ENCODE measurements at regions of chr1 and their contacts with region 1.

Region 1: DNA sequence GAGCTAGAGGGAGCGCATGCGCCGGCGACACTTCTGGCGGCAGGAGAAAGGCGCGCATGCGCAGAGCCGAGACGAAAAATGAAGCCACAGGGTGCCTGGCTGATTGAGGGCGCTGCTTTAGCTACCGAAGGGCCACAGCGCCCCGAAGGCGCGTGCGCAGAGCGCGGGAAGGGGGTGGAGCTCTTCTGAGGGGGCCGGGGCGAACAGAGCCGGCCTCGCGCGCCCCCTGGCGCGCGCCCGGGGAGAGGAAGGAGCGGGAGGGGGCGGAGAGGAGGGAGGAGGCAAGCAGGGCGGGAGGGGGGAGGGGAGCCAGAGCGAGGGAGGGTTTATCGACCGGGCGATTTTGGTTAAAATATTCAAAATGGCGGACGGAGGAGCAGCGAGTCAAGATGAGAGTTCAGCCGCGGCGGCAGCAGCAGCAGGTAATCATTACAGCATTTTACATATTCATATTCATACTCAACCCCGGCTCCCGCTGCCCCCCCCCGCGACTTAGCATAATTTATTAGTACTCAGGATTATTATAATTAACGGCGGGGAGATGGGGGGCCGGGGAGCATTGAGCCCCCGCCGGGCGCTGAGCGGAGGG is at the start of gene POU2F1:
- DNase-seq: peak; percentile 94
- ATAC-seq: peak; percentile 81
- H3K4me3 ChIP-seq: peak within 1 kb of the TSS; percentile 92
- H3K27ac ChIP-seq: peak within 1 kb of the TSS; percentile 98
- H3K4me1 ChIP-seq: peaks cover 10% of the 10 kb centered on the region; the same call in 1 of the 2 replicates
- H3K27me3 ChIP-seq: no peaks in the 10 kb centered on the region
- CTCF ChIP-seq: peak; percentile 64 to 81 (median 78)
- EP300 ChIP-seq: no peak
- POLR2A ChIP-seq: no peak; the same call in 1 of the 2 replicates
- RAD21 ChIP-seq: peak; percentile 63
- polyA plus RNA-seq, gene POU2F1: 2.5 to 4.6 TPM

Region 2: GRCh38 chr1:166910396-166910994 is 310.1 kb before region 1 on chr1:
- CTCF ChIA-PET with region 1: interaction called, 17 read pairs
- POLR2A ChIA-PET with region 1: no interaction called
- RAD21 ChIA-PET with region 1: interaction called, 9 read pairs
- SMC1A ChIA-PET with region 1: interaction called, 4 read pairs
- in situ Hi-C with region 1: no loop called
- intact Hi-C with region 1: no loop called
- DNase-seq: peak; percentile 70
- ATAC-seq: peak; percentile 99
- H3K4me3 ChIP-seq: no peak overlapping the region
- H3K27ac ChIP-seq: no peak overlapping the region
- H3K4me1 ChIP-seq: peaks cover 5% of the 10 kb centered on the region; the same call in 1 of the 2 replicates
- H3K27me3 ChIP-seq: no peaks in the 10 kb centered on the region
- CTCF ChIP-seq: peak; percentile 81 to 92 (median 85)
- EP300 ChIP-seq: no peak
- POLR2A ChIP-seq: no peak
- RAD21 ChIP-seq: peak; percentile 94

Region 3: DNA sequence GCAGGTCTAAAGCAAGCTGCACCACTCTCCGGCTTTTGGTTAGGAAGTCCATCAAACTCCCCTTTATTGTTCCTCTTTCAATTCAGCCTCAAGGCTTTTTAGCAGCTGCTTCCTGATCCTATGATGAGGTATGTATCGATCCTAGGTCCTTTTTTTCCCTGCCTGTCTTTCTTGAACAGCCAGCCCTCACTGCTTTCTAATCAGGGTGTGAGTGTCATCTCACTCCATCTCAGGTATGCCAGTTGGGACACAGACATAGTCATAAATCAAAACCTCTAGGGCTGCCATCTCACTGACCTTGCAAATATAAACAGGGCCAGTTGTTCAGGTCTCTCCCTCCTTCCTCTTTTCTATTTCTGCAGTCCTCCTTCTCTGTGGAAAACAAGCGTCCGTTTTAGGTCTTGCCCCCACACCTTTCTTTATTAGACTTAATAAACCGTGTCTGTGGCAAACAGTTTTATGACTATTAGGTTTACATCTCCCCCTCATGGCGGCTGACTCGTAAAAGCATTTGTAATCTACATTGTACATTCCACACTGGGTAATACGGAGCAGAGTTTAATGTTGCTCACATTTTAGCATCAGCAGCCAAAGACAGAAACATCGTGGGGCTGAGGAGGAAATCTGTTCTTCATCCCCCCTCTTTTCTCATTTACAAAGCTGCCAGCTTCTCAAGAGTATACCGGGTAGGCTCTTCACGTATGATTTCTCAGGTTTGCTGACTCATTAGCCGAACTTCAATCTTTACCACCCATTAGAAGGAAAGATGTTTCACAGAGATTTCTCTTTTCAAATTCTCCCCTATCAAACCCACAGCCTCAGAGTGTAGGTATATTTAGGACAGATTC is 115.1 kb before region 1 on chr1:
- CTCF ChIA-PET with region 1: interaction called, 6 read pairs
- POLR2A ChIA-PET with region 1: no interaction called
- RAD21 ChIA-PET with region 1: interaction called, 4 read pairs
- SMC1A ChIA-PET with region 1: interaction called, 4 read pairs
- in situ Hi-C with region 1: no loop called
- intact Hi-C with region 1: loop called (anchors 5 kb)
- DNase-seq: no peak
- ATAC-seq: peak; percentile 65
- H3K4me3 ChIP-seq: no peak overlapping the region
- H3K27ac ChIP-seq: no peak overlapping the region
- H3K4me1 ChIP-seq: peaks cover 28% of the 10 kb centered on the region
- H3K27me3 ChIP-seq: no peaks in the 10 kb centered on the region
- CTCF ChIP-seq: peak in 1 of 3 experiments; percentile 21; a peak in 1 of 6 replicates
- EP300 ChIP-seq: no peak
- POLR2A ChIP-seq: no peak
- RAD21 ChIP-seq: no peak

Region 4: DNA sequence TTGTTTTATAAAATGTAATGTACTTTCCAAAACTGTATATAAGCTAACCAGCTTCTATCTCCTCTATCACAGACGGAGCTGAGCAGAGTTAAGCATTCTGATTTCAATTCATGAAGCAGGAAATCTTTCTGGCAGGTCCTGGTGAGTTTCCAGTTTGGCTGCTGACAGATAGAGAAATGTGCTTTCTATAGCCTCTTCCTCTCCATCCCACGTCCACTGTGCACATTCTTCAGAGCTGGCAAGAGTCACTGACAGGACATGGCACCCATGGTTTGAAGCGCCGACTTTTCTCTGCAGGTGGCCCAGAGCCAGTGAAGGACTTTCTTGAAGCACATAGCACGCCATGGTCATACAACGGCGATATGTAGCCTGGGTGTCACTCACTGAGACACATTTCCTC is 52.2 kb before region 1 on chr1:
- CTCF ChIA-PET with region 1: no interaction called
- POLR2A ChIA-PET with region 1: no interaction called
- RAD21 ChIA-PET with region 1: no interaction called
- SMC1A ChIA-PET with region 1: no interaction called
- in situ Hi-C with region 1: no loop called
- intact Hi-C with region 1: no loop called
- DNase-seq: no peak
- ATAC-seq: no peak
- H3K4me3 ChIP-seq: no peak overlapping the region
- H3K27ac ChIP-seq: no peak overlapping the region
- H3K4me1 ChIP-seq: no peaks in the 10 kb centered on the region
- H3K27me3 ChIP-seq: no peaks in the 10 kb centered on the region; a peak in 1 of 4 replicates
- CTCF ChIP-seq: no peak
- EP300 ChIP-seq: no peak
- POLR2A ChIP-seq: no peak
- RAD21 ChIP-seq: no peak

Region 5: GRCh38 chr1:167249702-167250101 is 29.1 kb after region 1 on chr1:
- CTCF ChIA-PET with region 1: interaction called, 21 read pairs
- POLR2A ChIA-PET with region 1: interaction called, 10 read pairs
- RAD21 ChIA-PET with region 1: interaction called, 16 read pairs
- SMC1A ChIA-PET with region 1: interaction called, 15 read pairs
- in situ Hi-C with region 1: no loop called
- intact Hi-C with region 1: no loop called
- DNase-seq: no peak
- ATAC-seq: peak; percentile 78
- H3K4me3 ChIP-seq: no peak overlapping the region
- H3K27ac ChIP-seq: no peak overlapping the region
- H3K4me1 ChIP-seq: peaks cover 23% of the 10 kb centered on the region
- H3K27me3 ChIP-seq: no peaks in the 10 kb centered on the region
- CTCF ChIP-seq: no peak
- EP300 ChIP-seq: no peak
- POLR2A ChIP-seq: no peak
- RAD21 ChIP-seq: no peak

Region 6: DNA sequence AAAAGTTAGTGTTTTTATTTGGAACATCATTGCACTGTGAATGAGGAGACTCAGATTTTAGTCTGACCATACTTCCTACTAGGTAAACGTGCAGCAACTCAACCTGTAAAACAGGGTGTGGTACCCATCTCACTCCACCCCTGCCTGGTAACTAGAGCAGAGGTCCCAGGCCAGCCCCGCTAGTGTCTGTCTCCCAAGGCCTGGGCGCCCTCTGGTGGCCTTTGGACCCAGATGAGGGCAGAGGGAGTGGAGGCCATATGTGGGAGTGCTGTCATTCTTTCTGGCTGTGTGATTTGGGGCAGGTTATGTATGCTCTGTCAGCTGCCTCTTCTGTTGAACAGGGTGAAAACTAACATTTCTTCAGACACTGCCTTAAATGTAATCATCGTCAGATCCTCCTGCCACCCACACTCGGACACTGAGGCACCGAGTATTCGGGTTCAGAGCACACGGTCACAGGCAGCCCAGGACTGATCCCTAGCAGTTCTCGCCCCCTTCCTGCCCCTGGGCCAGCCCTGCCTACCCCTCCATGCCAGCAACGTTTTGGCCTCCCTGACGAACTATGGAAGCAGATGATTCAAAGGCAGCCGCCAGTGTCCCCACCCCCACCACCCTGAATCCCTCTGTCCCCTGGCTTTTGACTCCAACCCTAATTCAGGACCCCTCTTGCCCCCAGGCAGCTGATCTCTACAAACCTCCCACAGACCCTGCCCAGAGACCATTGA is 221.7 kb after region 1 on chr1:
- CTCF ChIA-PET with region 1: interaction called, 10 read pairs
- POLR2A ChIA-PET with region 1: no interaction called
- RAD21 ChIA-PET with region 1: interaction called, 4 read pairs
- SMC1A ChIA-PET with region 1: interaction called, 3 read pairs
- in situ Hi-C with region 1: no loop called
- intact Hi-C with region 1: no loop called
- DNase-seq: no peak
- ATAC-seq: peak; percentile 98
- H3K4me3 ChIP-seq: no peak overlapping the region
- H3K27ac ChIP-seq: no peak overlapping the region
- H3K4me1 ChIP-seq: peaks cover 8% of the 10 kb centered on the region
- H3K27me3 ChIP-seq: peaks cover 0 to 3% of the 10 kb centered on the region in 2 experiments; a peak in 1 of 4 replicates
- CTCF ChIP-seq: peak; percentile 92
- EP300 ChIP-seq: no peak
- POLR2A ChIP-seq: no peak
- RAD21 ChIP-seq: peak; percentile 98

Region 7: GRCh38 chr1:167663002-167663772 is 442.6 kb after region 1 on chr1:
- CTCF ChIA-PET with region 1: no interaction called
- POLR2A ChIA-PET with region 1: no interaction called
- RAD21 ChIA-PET with region 1: no interaction called
- SMC1A ChIA-PET with region 1: no interaction called
- in situ Hi-C with region 1: no loop called
- intact Hi-C with region 1: no loop called
- DNase-seq: peak; percentile 60
- ATAC-seq: peak; percentile 89
- H3K4me3 ChIP-seq: no peak overlapping the region
- H3K27ac ChIP-seq: peak overlapping the region; percentile 68
- H3K4me1 ChIP-seq: peaks cover 49% of the 10 kb centered on the region
- H3K27me3 ChIP-seq: no peaks in the 10 kb centered on the region
- CTCF ChIP-seq: no peak
- EP300 ChIP-seq: peak; percentile 65 to 73; a peak in 3 of 4 replicates
- POLR2A ChIP-seq: no peak
- RAD21 ChIP-seq: no peak

Region 8: GRCh38 chr1:167715157-167715999 is 494.7 kb after region 1 on chr1:
- CTCF ChIA-PET with region 1: no interaction called
- POLR2A ChIA-PET with region 1: no interaction called
- RAD21 ChIA-PET with region 1: interaction called, 3 read pairs
- SMC1A ChIA-PET with region 1: no interaction called
- in situ Hi-C with region 1: no loop called
- intact Hi-C with region 1: loop called (anchors 5 kb)
- DNase-seq: peak; percentile 97
- ATAC-seq: peak; percentile 40
- H3K4me3 ChIP-seq: peak overlapping the region; percentile 95
- H3K27ac ChIP-seq: peak overlapping the region; percentile 98
- H3K4me1 ChIP-seq: peaks cover 24% of the 10 kb centered on the region
- H3K27me3 ChIP-seq: no peaks in the 10 kb centered on the region
- CTCF ChIP-seq: peak; percentile 72 to 99 (median 80)
- EP300 ChIP-seq: 0 out of 4 replicates have a peak, but pooled peaks of 1 of the 2 experiments have one; percentile 60
- POLR2A ChIP-seq: no peak
- RAD21 ChIP-seq: peak; percentile 43; the same call in 1 of the 2 replicates